Activated naive CD4-positive, alpha-beta T cell treated with anti-CD3 and anti-CD28 coated beads for 36 hours (primary cell): ENCODE measurements at regions of chr5 and their contacts with region 1.

Region 1: DNA sequence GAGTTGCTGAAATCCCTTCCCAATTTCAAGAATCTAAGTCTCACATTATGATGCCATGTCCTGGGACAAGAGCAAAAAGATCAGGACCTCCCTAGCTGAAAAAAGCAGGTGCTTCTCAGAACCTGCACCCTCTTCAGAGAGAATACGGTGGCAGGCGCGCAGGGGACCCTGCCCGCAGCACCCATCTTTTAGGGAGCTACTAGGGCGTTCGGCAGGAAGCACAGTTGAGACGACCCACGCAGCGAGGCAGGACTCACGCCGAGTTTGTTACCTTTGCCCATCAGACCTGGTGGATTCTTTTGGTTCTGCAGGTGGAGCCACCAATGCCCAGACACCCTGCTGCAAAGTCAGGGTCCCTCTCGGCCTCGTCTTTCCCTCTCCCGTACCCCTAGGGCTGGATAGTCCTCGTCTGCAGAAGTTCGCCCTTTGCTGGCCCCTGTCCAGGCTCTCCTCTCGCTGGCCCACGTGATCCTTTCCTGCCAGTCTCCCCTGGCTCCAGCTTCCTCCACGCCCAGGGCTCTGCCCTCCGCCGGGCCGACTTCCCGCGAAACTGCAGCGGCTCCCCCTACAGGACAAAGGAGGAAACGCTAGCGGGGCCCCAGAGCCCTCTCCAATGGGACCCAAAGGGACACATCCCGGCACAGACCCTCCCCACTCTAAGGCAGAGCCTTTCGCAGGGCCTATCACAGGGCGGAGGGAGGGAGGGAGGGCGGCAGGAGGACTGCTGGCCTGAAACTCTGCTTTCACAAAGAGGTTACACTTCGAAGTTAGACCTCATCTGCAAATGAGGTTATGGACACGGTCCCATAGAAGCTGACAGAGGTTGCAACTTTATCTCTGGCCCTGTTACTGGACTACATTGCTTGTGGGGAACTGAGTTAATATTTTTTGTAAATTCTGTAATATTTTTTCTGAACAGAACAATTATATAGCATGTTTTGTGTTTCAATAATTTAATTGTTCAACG is 28.8 kb downstream of the TMEM174 start:
- DNase-seq: peak; percentile 81
- H3K4me3 Mint-ChIP-seq: no peak overlapping the region
- H3K27ac Mint-ChIP-seq: no peak overlapping the region
- H3K4me1 Mint-ChIP-seq: peaks cover 5% of the 10 kb centered on the region
- H3K27me3 Mint-ChIP-seq: peaks cover 61% of the 10 kb centered on the region

Region 2: DNA sequence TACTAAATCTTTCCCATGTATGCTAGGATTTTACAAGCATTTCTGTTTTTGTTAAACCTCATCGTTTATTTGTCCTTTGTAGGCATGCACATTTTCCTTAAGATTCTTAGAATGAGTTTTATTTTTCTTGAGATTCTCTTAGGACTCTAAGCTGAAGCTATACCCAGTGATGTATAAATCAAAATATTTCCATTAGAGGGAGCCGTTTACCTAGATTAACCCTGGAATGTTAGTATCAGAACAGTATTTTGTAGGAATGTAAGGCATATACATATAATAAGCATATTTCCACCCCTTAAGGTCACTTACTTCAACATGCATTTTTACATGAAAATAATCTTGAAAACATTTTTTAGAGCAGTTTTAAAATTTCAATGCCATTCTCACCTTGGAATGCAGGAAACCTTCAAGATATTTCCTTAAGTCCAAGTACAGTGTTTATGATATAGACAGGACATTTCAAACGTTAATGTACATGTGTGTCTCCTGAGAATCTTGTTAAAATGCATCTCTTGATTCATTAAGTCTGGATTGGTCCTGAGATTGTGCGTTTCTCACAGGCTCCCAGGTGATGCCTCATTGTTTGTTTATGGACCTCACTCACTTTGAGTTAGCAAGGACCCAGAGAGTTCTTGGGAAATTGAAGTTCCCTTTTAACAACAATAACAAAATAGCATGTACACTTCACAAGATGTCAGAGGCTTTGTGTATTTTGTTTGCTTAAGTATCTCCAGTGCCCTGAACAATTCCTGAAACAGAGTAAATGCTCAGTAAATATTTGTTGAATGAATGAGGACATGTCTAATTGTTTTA is 280.9 kb before region 1 on chr5:
- CTCF ChIA-PET with region 1: interaction called, 3 read pairs
- intact Hi-C with region 1: loop called (anchors 1 kb)
- DNase-seq: no peak
- H3K4me3 Mint-ChIP-seq: no peak overlapping the region
- H3K27ac Mint-ChIP-seq: no peak overlapping the region
- H3K4me1 Mint-ChIP-seq: no peaks in the 10 kb centered on the region
- H3K27me3 Mint-ChIP-seq: peaks cover 5% of the 10 kb centered on the region

Region 3: DNA sequence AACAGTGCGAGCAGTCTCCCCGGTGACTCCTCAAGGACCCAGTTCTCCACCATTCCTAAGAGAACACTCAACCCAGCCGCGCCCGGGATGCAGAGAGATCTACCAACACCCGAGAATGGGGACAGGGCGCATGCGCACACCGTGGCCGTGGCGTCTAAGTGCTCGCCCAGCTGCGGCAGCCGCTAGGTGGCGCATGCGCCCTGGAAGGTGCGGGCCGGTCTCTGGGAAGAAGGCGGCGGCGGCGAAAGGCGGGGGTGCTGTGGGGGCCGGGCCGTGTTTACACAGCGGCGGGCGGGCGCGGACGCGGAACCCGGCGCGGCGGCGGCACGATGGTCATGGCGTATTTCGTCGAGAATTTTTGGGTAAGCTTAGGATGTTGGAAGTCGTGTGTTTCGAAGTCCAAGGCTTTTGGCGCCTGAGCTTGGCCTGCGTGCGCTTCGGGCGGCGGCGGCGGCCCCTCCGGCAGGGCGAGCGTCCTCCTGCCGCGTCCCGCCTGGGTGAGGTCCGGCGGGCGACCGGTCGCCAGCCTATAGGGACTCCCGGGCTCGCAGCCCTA is 246.0 kb before region 1 on chr5 and contains the start of gene FCHO2:
- CTCF ChIA-PET with region 1: interaction called, 7 read pairs
- intact Hi-C with region 1: loop called (anchors 1 kb)
- DNase-seq: peak; percentile 95
- H3K4me3 Mint-ChIP-seq: peak within 1 kb of the TSS; percentile 91
- H3K27ac Mint-ChIP-seq: peak within 1 kb of the TSS; percentile 63
- H3K4me1 Mint-ChIP-seq: peaks cover 10% of the 10 kb centered on the region
- H3K27me3 Mint-ChIP-seq: peaks cover 47% of the 10 kb centered on the region
- total RNA-seq, gene FCHO2: 0.54 to 0.93 TPM

Region 4: DNA sequence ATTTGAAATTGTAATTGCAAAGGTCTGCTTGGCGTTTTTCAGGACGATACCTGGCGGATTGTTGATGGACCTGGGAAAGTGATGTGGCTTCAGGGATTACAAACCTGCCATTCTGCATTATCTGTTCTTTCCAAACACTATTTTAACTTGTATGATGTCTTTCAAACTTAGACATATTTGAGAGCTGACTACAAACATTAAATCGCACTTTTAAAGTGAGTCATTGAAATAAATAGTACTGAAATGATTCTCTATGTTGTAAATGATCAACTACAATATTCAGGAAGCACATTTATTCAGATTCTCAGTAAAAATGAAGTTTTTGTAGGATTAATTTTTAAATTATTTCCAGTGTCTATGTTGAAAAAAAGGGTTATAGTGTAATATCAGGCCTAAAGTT is 113.8 kb before region 1 on chr5:
- CTCF ChIA-PET with region 1: interaction called, 4 read pairs
- intact Hi-C with region 1: loop called (anchors 1 kb)
- DNase-seq: no peak
- H3K4me3 Mint-ChIP-seq: no peak overlapping the region
- H3K27ac Mint-ChIP-seq: no peak overlapping the region
- H3K4me1 Mint-ChIP-seq: no peaks in the 10 kb centered on the region
- H3K27me3 Mint-ChIP-seq: peaks cover 20% of the 10 kb centered on the region